ENCODE measurements at regions of chr7 and their contacts with region 1.

Region 1: GRCh38 chr7:12686894-12687717 is at the start of gene ARL4A:
- DNase-seq: peak; percentile 97
- H3K4me3 ChIP-seq: peak within 1 kb of the TSS; percentile 65
- CTCF ChIP-seq: peak; percentile 33

Region 2: DNA sequence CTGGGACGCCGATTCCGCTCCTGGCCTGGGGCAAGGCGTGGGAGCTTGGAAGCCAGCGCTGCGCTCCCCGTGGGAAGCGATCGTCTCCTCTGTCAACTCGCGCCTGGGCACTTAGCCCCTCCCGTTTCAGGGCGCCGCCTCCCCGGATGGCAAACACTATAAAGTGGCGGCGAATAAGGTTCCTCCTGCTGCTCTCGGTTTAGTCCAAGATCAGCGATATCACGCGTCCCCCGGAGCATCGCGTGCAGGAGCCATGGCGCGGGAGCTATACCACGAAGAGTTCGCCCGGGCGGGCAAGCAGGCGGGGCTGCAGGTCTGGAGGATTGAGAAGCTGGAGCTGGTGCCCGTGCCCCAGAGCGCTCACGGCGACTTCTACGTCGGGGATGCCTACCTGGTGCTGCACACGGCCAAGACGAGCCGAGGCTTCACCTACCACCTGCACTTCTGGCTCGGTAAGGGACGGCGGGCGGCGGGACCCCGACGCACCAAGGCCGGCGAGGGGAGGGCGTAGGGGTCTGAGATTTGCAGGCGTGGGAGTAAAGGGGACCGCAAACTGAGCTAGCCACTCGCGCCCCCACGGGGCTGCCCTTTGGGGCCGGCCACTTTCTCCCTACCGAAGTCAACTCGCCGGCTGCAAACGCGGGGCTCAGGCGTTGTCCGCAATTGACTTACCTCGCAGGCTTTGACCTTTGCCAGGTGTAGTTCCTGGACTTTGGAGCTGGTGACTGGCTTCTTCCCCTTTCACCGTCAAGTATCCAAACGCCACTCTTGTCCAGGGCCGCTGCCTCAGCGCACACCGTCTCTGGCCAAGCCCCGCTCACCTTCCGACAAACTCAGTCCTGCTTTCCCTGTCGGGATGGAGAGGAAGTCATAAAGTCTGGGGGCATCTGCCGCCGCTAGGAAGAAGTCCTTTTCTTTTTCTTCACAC is 116.3 kb before region 1 on chr7 and contains the start of gene SCIN:
- in situ Hi-C with region 1: no loop called
- DNase-seq: no peak
- H3K4me3 ChIP-seq: peak within 1 kb of the TSS; percentile 51
- CTCF ChIP-seq: no peak

Region 3: DNA sequence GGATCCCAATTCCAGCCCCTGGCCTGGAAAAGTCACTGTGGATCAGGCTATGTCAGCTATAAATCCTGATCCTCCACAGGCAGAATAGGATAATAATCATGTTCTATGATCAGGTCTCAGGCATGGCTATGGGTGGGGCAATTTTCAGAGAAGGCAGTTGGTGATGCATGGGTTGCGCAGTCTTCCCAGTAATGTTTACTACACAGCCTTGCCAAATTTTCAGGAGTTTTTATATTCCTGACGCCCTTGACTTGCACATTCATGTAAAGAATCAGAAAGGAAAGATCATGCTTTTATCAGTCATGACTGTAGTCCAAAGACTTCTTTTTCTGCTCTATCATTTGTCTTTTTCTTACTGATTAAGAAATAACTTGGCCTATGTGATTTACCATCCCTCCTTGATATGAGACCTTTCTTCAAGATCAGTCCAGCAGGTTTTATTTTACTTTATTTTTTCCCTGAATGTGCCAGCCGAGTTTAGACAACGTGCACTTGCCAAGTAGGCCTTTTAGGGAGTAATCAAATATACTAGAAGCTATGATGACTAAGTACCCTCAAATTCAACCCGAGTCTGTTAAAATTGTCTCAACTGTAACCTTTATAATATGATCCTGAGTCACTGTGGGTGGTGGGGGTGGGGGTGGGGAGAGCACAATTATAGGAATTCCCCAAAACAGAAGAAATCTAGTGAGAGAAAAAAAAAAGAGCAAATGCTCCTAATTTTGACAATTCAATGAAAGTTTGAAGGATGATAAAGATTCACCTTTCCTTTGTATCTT is 32.2 kb after region 1 on chr7:
- in situ Hi-C with region 1: no loop called
- DNase-seq: no peak
- H3K4me3 ChIP-seq: no peak overlapping the region
- CTCF ChIP-seq: no peak

Region 4: GRCh38 chr7:13262929-13263530 is 575.9 kb after region 1 on chr7:
- in situ Hi-C with region 1: loop called (anchors 10 kb)
- DNase-seq: peak; percentile 27
- H3K4me3 ChIP-seq: no peak overlapping the region
- CTCF ChIP-seq: peak; percentile 50

Measured in astrocyte of the cerebellum (primary cell).